GM13976 (cell line): ENCODE measurements at regions of chr1 and their contacts with region 1.

Region 1: DNA sequence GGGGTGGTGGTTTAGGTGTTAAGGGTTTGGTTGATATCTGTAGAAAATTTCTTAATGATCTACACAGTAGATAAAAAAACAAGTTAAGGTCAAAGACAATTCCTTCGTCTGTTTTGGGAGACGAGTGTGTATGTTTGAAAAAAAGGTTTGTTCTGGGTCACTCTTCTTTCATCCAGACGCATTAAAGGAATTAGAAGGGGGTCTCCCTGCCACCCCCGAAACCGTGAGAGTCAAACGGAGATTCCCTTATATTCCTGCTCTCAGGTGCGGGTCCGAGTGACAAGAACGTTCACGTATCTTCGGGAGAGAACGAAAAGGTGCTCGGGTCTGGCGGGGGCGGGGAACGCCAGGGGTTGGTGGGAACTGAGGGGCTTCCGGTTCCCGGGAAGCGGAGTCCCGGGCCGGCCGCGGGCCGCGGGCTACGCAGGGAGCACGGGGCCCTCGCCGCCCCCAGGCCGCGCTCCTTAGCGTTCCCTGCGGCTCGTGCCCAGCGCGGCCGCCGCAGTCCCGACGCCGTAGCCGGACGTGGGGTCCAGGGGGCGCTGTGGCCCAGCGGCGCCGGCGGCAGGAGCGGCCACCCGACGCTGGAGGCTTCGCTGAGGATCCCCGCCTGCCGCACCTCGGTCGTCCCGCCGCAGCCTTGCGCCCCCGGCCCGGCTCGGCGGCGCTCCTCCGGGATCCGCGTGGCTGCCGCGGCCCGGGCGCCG is at the start of gene ZFYVE9:
- DNase-seq: peak; percentile 86
- CTCF ChIP-seq: peak; percentile 92

Region 2: DNA sequence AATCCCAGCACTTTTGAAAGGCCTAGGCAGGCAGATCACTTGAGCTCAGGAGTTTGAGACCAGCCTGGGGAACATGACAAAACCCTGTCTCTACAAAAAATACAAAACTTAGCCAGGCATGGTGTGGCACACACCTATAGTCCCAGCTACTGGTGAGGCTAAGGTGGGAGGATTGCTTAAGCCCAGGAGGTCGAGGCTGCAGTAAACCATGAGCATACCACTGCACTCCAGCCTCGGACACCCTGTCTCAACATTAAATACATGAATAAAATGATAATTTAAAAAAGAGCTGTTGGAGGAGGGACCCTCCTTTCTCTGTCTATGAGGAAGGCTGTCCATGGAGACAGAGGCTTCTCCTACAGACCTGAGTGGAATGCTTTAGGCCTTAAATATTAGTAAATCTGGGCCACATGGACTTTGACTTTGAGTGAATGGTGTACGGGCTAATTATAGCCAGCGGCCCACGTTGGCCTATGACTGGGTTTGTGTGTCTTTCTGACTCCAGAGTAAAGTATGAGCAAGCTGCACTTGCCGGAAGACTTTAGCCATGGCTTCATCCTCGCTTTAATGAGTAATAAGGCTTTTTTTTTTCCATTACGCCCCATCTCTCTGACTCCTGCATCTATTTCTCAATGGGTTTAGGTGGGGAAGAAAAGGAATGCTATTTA is 172.5 kb before region 1 on chr1:
- in situ Hi-C with region 1: no loop called
- DNase-seq: no peak
- CTCF ChIP-seq: no peak

Region 3: DNA sequence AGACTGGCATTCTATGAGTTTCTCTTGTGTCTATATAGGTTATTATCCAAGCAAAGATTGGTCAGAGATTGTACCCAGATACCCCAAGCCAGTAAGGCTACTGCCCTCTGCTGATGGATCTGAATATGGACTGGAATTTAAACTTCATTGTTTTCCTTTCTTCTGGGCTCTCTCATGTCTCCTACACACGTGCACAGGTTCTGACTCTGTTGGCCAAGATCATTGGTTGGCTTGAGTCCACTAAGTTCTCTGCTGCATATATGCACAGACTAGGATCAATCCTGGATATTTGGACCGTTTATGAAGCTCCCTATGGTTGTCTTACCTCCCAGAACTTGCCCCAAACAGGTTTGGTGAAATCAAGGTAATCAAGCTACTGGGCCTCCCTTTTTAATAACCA is 154.7 kb after region 1 on chr1:
- in situ Hi-C with region 1: loop called (anchors 10 kb)
- DNase-seq: peak; percentile 73
- CTCF ChIP-seq: peak; percentile 71

Region 4: DNA sequence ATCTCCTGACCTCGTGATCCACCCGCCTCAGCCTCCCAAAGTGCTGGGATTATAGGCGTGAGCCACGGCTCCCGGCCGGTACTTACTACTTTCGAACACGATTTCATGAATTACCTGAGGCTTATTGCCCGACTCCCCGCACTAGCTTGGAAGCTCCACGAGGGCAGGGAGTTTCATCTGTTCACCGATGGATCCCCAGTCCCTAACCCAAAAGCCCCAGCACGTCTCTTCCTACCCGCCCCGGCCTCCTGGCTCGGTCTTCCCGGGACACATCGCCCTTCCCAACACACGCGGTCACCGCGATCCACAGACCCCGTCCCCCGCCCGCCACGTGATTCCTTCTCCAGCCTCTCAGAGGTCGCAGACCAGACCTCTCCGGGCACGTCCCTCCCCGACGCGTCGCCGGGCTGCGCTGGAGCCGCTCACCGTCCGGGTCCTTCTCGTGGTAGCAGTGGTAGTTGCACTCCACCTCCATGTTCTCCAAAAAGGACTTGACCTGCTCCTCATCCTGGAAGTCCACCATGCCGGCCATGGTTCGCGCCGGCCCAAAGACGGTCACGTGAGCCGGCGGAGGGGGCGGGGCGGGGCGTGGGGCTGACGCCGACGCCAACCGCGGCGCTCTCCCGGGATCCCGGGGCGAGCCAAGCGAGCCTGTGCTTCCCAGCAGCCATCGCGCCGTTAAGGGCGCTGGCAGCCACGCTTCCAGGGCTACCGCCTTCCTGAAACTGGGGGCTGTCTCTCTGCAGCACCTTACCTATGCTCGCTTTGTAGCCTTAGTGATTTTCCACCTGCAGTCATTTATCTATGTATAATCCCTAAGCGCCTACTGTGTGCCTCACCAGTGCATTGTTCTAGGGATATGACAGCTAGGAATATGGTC is 556.4 kb after region 1 on chr1 and contains the start of gene COA7:
- in situ Hi-C with region 1: loop called (anchors 25 kb)
- DNase-seq: peak; percentile 86
- CTCF ChIP-seq: no peak